Heart left ventricle (tissue), 16 donors: ENCODE measurements at regions of chr4 and their contacts with region 1.

Region 1: DNA sequence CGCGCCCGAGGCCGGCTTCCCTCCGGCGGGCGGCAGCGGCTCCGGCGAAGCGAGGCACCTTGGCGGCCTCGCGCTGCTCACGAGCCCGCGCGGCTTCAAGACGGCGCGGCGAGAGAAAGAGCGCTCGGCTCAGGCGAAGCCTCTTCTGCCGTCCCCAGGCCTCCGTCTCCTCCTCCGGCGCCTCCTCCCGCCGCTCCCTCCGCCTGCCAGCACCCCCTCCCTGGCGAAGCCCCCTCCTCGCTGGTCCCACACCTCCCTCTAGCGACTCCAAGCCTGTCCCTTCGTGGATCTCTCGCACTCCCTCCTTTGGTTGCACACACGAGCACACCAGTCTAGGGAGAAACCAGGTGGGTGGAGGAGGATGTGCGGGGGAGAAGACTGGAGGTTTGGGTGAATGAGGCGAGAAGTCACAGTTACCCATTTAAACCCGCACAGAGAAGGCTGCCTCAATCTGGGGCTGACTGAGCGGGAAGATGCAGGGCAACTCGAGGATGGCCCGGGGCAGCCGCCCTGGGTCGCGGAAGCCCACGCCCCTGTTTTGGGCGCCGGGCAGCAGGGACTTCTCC is at the start of gene CAMK2D:
- DNase-seq: peak; percentile 90 to 92 (median 92)
- ATAC-seq: peak; percentile 74 to 84 (median 80)
- H3K4me3 ChIP-seq: peak within 1 kb of the TSS; percentile 70 to 91 (median 88)
- H3K27ac ChIP-seq: peak within 1 kb of the TSS; percentile 97 to 100 (median 99)
- H3K4me1 ChIP-seq: peaks cover 0 to 42% (median 12%) of the 10 kb centered on the region in 12 donors
- H3K27me3 ChIP-seq: no peaks in the 10 kb centered on the region
- CTCF ChIP-seq: peak in 11 of 12 donors; percentile 40 to 76 (median 67)
- POLR2A ChIP-seq: peak in 1 of 2 donors; percentile 57
- total RNA-seq, gene CAMK2D: 167 to 294 (median 224) TPM

Region 2: DNA sequence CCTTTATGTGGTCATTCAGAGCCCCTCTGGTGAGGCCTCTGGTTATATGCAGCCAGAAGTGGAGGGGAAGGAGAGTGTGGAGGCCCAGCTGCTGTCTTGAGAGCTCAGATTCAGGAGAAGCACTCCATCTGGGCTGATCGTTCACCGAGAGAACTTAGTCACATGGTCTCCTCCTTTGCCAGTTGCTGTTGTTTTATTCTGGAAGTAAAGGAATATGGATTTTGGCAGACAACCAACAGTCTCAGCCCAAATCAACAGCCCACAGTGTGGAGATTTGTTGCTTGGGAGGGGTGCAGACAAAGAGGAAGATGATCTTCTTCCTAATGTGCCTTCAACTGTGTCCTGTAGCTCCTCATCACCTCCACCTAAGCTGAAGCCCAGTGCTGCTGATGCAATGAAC is 356.9 kb before region 1 on chr4:
- intact Hi-C with region 1: loop called in 1 of 10 experiments (anchors 10 kb)
- DNase-seq: peak in 2 of 5 donors; percentile 21 to 28
- ATAC-seq: peak in 3 of 4 donors; percentile 22 to 59 (median 48)
- H3K4me3 ChIP-seq: no peak overlapping the region
- H3K27ac ChIP-seq: no peak overlapping the region
- H3K4me1 ChIP-seq: peaks cover 0 to 19% (median 2%) of the 10 kb centered on the region in 12 donors
- H3K27me3 ChIP-seq: no peaks in the 10 kb centered on the region
- CTCF ChIP-seq: no peak
- POLR2A ChIP-seq: no peak

Region 3: GRCh38 chr4:113452868-113453620 is 308.7 kb before region 1 on chr4:
- intact Hi-C with region 1: loop called in 5 of 10 experiments (anchors 5 to 10 kb)
- DNase-seq: peak in 1 of 5 donors; percentile 43
- ATAC-seq: peak in 1 of 4 donors; percentile 39
- H3K4me3 ChIP-seq: no peak overlapping the region
- H3K27ac ChIP-seq: peak overlapping the region in 11 of 12 donors; percentile 4 to 84 (median 45)
- H3K4me1 ChIP-seq: peaks cover 0 to 47% (median 23%) of the 10 kb centered on the region in 12 donors
- H3K27me3 ChIP-seq: no peaks in the 10 kb centered on the region
- CTCF ChIP-seq: no peak
- POLR2A ChIP-seq: no peak

Region 4: GRCh38 chr4:113539408-113539807 is 222.3 kb before region 1 on chr4:
- intact Hi-C with region 1: loop called in 1 of 10 experiments (anchors 2 kb)
- DNase-seq: no peak
- ATAC-seq: no peak
- H3K4me3 ChIP-seq: no peak overlapping the region
- H3K27ac ChIP-seq: peak overlapping the region in 6 of 12 donors; percentile 19 to 88 (median 77)
- H3K4me1 ChIP-seq: peaks cover 2 to 70% (median 40%) of the 10 kb centered on the region in 12 donors
- H3K27me3 ChIP-seq: no peaks in the 10 kb centered on the region
- CTCF ChIP-seq: no peak
- POLR2A ChIP-seq: no peak

Region 5: GRCh38 chr4:113636438-113636818 is 125.3 kb before region 1 on chr4:
- intact Hi-C with region 1: loop called in 4 of 10 experiments (anchors 5 to 10 kb)
- DNase-seq: no peak
- ATAC-seq: peak in 2 of 4 donors; percentile 6
- H3K4me3 ChIP-seq: no peak overlapping the region
- H3K27ac ChIP-seq: peak overlapping the region; percentile 62 to 95 (median 77)
- H3K4me1 ChIP-seq: peaks cover 0 to 90% (median 70%) of the 10 kb centered on the region in 12 donors
- H3K27me3 ChIP-seq: no peaks in the 10 kb centered on the region
- CTCF ChIP-seq: peak in 3 of 12 donors; percentile 6 to 35 (median 19)
- POLR2A ChIP-seq: no peak

Region 6: DNA sequence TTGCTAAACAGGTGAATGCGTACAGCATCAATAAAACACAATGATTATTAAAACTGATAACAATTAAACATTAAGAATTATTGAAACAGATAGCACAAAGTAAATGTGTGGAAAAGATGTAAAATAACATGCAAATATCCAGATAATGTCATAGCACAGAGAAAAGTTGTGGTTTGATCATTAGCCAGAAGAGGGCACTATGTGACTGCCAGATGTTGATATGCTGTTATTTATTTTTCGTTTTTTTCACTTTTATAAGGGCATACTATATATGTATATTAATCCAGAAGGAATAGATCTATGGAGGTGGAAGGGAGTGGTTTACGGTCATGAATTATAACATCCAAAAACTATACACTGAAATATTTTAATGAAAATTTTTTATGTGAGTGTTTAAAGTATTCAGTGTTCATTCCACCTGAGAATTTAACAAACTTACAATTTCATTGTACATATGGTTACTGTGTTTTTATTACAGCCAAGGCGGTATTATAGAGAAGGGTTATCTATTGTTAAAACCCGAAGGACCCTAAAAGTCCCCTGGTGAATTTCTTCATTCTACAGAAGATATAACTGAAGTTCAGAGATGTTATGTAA is 625.0 kb after region 1 on chr4:
- intact Hi-C with region 1: loop called in 1 of 10 experiments (anchors 10 kb)
- DNase-seq: no peak
- ATAC-seq: no peak
- H3K4me3 ChIP-seq: no peak overlapping the region
- H3K27ac ChIP-seq: no peak overlapping the region
- H3K4me1 ChIP-seq: no peaks in the 10 kb centered on the region
- H3K27me3 ChIP-seq: peaks cover 0 to 9% (median 0%) of the 10 kb centered on the region in 9 donors
- CTCF ChIP-seq: peak; percentile 37 to 75 (median 61)
- POLR2A ChIP-seq: no peak